B cell (primary cell): ENCODE measurements at regions of chr7 and their contacts with region 1.

Region 1: GRCh38 chr7:22110227-22110839 is 164.6 kb upstream of the CDCA7L start:
- DNase-seq: peak; percentile 86
- ATAC-seq: peak; percentile 90
- H3K4me3 ChIP-seq: no peak overlapping the region
- H3K4me3 Mint-ChIP-seq: no peak overlapping the region
- H3K27ac ChIP-seq: no peak overlapping the region
- H3K27ac Mint-ChIP-seq: no peak overlapping the region
- H3K4me1 ChIP-seq: no peaks in the 10 kb centered on the region
- H3K4me1 Mint-ChIP-seq: no peaks in the 10 kb centered on the region
- H3K27me3 ChIP-seq: no peaks in the 10 kb centered on the region
- H3K27me3 Mint-ChIP-seq: no peaks in the 10 kb centered on the region
- CTCF ChIP-seq: peak; percentile 85

Region 2: GRCh38 chr7:22121702-22122474 is 11.6 kb after region 1 on chr7:
- CTCF ChIA-PET with region 1: interaction called, 19 read pairs
- POLR2A ChIA-PET with region 1: no interaction called
- intact Hi-C with region 1: no loop called
- DNase-seq: no peak
- ATAC-seq: peak; percentile 51
- H3K4me3 ChIP-seq: peak overlapping the region in 1 of 5 experiments; percentile 22
- H3K4me3 Mint-ChIP-seq: peak overlapping the region; percentile 21
- H3K27ac ChIP-seq: no peak overlapping the region
- H3K27ac Mint-ChIP-seq: no peak overlapping the region
- H3K4me1 ChIP-seq: peaks cover 3 to 9% of the 10 kb centered on the region in 2 donors
- H3K4me1 Mint-ChIP-seq: peaks cover 8% of the 10 kb centered on the region
- H3K27me3 ChIP-seq: no peaks in the 10 kb centered on the region
- H3K27me3 Mint-ChIP-seq: no peaks in the 10 kb centered on the region
- CTCF ChIP-seq: no peak

Region 3: GRCh38 chr7:22452142-22452959 is 342.0 kb after region 1 on chr7:
- CTCF ChIA-PET with region 1: interaction called, 7 read pairs
- POLR2A ChIA-PET with region 1: no interaction called
- intact Hi-C with region 1: loop called (anchors 1 kb)
- DNase-seq: peak; percentile 70
- ATAC-seq: peak; percentile 29
- H3K4me3 ChIP-seq: peak overlapping the region in 2 of 5 experiments; percentile 24 to 45
- H3K4me3 Mint-ChIP-seq: peak overlapping the region; percentile 61
- H3K27ac ChIP-seq: no peak overlapping the region
- H3K27ac Mint-ChIP-seq: no peak overlapping the region
- H3K4me1 ChIP-seq: peaks cover 17 to 22% of the 10 kb centered on the region in 2 donors
- H3K4me1 Mint-ChIP-seq: peaks cover 27% of the 10 kb centered on the region
- H3K27me3 ChIP-seq: peaks cover 0 to 7% (median 0%) of the 10 kb centered on the region in 4 experiments
- H3K27me3 Mint-ChIP-seq: peaks cover 4% of the 10 kb centered on the region
- CTCF ChIP-seq: peak; percentile 73

Region 4: DNA sequence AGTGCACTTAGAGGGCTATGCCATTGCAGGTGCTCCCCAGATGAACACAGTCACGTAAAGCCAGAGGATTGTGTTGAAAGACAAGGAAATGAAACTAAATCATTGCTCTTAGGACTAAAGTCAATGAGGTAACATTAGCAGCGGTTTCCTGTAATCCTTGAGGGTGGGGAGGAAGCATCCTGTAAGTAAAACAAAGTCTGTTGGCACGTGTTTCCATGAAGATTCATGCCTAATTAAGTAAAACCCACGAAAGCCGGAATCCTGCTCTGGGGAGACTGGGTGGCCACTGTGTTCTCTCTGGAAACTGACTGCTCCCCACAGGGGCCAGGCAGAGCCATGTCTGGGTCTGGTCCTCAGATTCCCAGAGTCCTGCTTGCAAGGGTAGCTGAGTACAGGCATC is 371.4 kb after region 1 on chr7:
- CTCF ChIA-PET with region 1: interaction called, 109 read pairs
- POLR2A ChIA-PET with region 1: no interaction called
- intact Hi-C with region 1: no loop called
- DNase-seq: peak; percentile 66
- ATAC-seq: peak; percentile 89
- H3K4me3 ChIP-seq: no peak overlapping the region
- H3K4me3 Mint-ChIP-seq: peak overlapping the region; percentile 34
- H3K27ac ChIP-seq: no peak overlapping the region
- H3K27ac Mint-ChIP-seq: peak overlapping the region; percentile 32
- H3K4me1 ChIP-seq: peaks cover 13 to 18% of the 10 kb centered on the region in 2 donors
- H3K4me1 Mint-ChIP-seq: peaks cover 11% of the 10 kb centered on the region
- H3K27me3 ChIP-seq: no peaks in the 10 kb centered on the region
- H3K27me3 Mint-ChIP-seq: no peaks in the 10 kb centered on the region
- CTCF ChIP-seq: no peak

Region 5: DNA sequence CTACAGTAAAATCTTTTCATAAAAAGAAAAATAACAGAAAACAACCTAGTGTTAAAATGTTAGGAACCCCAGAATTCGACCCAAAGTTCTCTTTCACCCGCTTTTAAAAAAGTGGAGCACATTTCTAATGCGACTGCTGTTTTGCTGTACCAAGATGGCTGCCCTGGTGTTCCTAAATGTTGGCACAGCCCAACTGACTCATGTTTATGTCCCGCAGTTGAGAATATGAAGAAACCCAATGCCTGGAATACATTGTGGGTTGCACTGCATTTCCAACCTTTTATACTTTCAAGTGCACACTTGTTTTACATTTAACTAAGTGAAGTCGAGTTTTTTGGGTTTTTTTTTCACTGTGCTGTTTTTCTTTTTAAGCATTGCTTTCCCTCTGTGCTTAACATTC is 388.7 kb after region 1 on chr7:
- CTCF ChIA-PET with region 1: interaction called, 72 read pairs
- POLR2A ChIA-PET with region 1: no interaction called
- intact Hi-C with region 1: loop called (anchors 1 kb)
- DNase-seq: no peak
- ATAC-seq: no peak
- H3K4me3 ChIP-seq: no peak overlapping the region
- H3K4me3 Mint-ChIP-seq: no peak overlapping the region
- H3K27ac ChIP-seq: no peak overlapping the region
- H3K27ac Mint-ChIP-seq: no peak overlapping the region
- H3K4me1 ChIP-seq: peaks cover 0 to 6% of the 10 kb centered on the region in 2 donors
- H3K4me1 Mint-ChIP-seq: peaks cover 6% of the 10 kb centered on the region
- H3K27me3 ChIP-seq: peaks cover 0 to 4% (median 2%) of the 10 kb centered on the region in 4 experiments
- H3K27me3 Mint-ChIP-seq: peaks cover 8% of the 10 kb centered on the region
- CTCF ChIP-seq: no peak